Activated naive CD4-positive, alpha-beta T cell treated with anti-CD3 and anti-CD28 coated beads for 36 hours (primary cell): ENCODE measurements at regions of chr12 and their contacts with region 1.

Region 1: GRCh38 chr12:51424662-51425438 is at the start of gene SLC4A8:
- DNase-seq: peak; percentile 83
- H3K4me3 Mint-ChIP-seq: peak within 1 kb of the TSS; percentile 74
- H3K27ac Mint-ChIP-seq: no peak within 1 kb of the TSS
- H3K4me1 Mint-ChIP-seq: peaks cover 10% of the 10 kb centered on the region
- H3K27me3 Mint-ChIP-seq: no peaks in the 10 kb centered on the region
- total RNA-seq, gene SLC4A8: 0.89 to 1.8 TPM

Region 2: GRCh38 chr12:51521554-51522276 is 96.9 kb after region 1 on chr12:
- CTCF ChIA-PET with region 1: interaction called, 18 read pairs
- intact Hi-C with region 1: no loop called
- DNase-seq: no peak
- H3K4me3 Mint-ChIP-seq: no peak overlapping the region
- H3K27ac Mint-ChIP-seq: no peak overlapping the region
- H3K4me1 Mint-ChIP-seq: no peaks in the 10 kb centered on the region
- H3K27me3 Mint-ChIP-seq: no peaks in the 10 kb centered on the region

Region 3: DNA sequence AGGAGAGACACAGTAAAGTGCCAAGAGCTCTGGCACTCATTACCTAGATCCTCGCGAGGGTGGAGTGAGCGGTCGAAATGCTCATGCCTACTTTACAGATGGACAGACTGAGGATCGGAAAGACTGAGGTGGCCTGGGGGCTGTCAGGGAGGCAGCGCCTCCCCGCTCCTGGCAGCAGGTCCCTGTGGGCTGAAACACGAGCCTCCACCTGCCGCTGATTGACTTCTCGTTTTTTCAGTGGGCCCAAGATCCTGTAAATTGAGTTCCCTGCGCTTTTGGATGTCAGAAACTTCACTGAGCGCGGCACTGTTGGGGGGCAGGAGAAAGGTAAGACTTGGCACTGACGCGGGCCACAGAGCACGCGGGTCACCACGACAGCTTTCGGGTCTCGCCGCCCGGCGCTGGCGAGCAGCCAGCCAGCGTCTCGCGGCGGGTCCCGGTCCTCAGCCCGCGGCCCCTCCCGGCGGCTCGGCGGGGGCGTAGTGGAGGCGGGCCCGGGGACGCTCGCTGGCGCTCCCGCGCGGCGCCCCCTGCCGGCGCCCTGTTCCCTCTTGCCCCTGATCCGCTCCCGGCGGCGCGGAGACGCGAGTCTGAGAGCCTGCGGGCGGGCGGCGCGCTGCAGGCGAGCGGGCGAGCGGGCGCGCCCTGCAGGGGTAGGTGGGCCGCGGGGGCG is 165.6 kb after region 1 on chr12:
- CTCF ChIA-PET with region 1: no interaction called
- intact Hi-C with region 1: loop called (anchors 5 kb)
- DNase-seq: peak; percentile 76
- H3K4me3 Mint-ChIP-seq: peak overlapping the region; percentile 80
- H3K27ac Mint-ChIP-seq: no peak overlapping the region
- H3K4me1 Mint-ChIP-seq: peaks cover 12% of the 10 kb centered on the region
- H3K27me3 Mint-ChIP-seq: peaks cover 47% of the 10 kb centered on the region

Region 4: GRCh38 chr12:51814311-51815088 is 389.6 kb after region 1 on chr12:
- CTCF ChIA-PET with region 1: no interaction called
- intact Hi-C with region 1: loop called (anchors 2 kb)
- DNase-seq: peak; percentile 75
- H3K4me3 Mint-ChIP-seq: peak overlapping the region; percentile 65
- H3K27ac Mint-ChIP-seq: no peak overlapping the region
- H3K4me1 Mint-ChIP-seq: peaks cover 2% of the 10 kb centered on the region
- H3K27me3 Mint-ChIP-seq: peaks cover 5% of the 10 kb centered on the region